HEK293 (cell line): ENCODE measurements at regions of chr22 and their contacts with region 1.

Region 1: GRCh38 chr22:41468381-41469217 is at the starts of genes ACO2 and PHF5A:
- H3K4me3 ChIP-seq: peak within 1 kb of the TSS; percentile 90
- H3K27ac ChIP-seq: peak within 1 kb of the TSS; percentile 84
- H3K4me1 ChIP-seq: no peaks in the 10 kb centered on the region
- CTCF ChIP-seq: no peak

Region 2: DNA sequence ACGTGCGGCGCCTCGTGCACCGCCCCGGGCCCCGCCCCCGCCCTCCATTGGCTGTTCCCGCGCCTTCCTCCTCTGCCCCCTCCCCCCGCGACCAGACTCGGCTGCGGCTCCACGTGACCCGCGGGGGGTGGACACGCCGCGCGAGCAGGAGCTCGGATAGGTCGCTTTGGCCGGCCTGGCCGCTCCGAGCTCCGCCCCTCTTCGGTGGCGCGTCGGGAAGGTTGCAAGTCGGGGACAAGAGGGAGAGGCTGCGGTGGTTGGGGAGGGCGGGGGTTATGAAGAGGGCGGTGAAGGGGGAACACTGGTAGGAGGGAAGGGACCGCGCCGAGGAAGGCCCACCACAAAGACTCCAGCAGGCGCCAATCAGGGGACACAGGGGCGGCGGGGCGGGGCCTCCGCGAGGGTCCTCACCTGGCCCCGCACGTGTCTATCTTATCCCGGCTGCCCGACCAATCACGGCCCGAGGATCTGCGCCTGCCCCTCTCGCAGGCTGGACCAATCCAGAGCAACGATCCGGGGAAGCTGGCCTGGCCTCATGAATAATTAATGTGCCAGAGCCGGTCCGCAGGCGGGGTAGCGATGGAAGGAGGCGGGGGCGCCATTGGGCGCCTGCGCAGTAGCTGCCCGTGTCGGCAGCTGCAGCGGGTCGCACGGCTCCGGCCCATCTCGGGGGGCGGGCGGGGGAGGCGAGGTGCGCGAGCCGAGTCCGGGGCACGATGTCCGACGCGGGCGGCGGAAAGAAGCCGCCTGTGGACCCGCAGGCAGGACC is 87.1 kb before region 1 on chr22 and contains the start of gene TEF:
- CTCF ChIA-PET with region 1: no interaction called
- POLR2A ChIA-PET with region 1: interaction called, 15 read pairs
- H3K4me3 ChIP-seq: peak within 1 kb of the TSS; percentile 66
- H3K27ac ChIP-seq: peak within 1 kb of the TSS; percentile 75
- H3K4me1 ChIP-seq: peaks cover 9% of the 10 kb centered on the region
- CTCF ChIP-seq: no peak

Region 3: GRCh38 chr22:41403532-41404318 is 64.9 kb before region 1 on chr22:
- CTCF ChIA-PET with region 1: interaction called, 16 read pairs
- POLR2A ChIA-PET with region 1: interaction called, 10 read pairs
- H3K4me3 ChIP-seq: no peak overlapping the region
- H3K27ac ChIP-seq: no peak overlapping the region
- H3K4me1 ChIP-seq: no peaks in the 10 kb centered on the region
- CTCF ChIP-seq: peak; percentile 98

Region 4: DNA sequence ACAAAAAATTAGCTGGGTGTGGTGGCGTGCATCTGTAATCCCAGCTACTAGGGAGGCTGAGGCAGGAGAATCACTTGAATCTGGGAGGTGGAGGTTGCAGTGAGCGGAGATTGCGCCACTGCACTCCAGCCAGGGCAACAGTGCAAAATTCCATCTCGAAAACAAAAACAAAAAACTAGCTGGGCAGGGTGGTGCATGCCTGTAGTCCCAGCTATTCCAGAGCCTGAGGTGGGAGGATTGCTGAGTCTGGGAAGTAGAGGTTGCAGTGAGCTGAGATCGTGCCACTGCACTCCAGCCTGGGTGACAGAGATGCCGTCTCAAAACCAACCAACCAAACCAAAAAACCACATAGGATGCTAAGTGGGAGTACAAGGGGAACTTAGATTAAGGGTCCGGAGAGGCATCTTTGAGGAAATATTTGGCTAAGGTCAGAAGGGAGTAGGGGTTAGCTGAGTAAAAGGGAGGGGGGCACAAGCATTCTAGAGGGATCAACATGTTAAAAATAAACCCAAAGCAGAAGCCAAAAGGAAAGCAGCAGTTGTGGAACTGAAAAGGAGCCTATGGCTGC is 10.4 kb before region 1 on chr22:
- CTCF ChIA-PET with region 1: interaction called, 5 read pairs
- POLR2A ChIA-PET with region 1: interaction called, 38 read pairs
- H3K4me3 ChIP-seq: no peak overlapping the region
- H3K27ac ChIP-seq: no peak overlapping the region
- H3K4me1 ChIP-seq: no peaks in the 10 kb centered on the region
- CTCF ChIP-seq: no peak

Region 5: DNA sequence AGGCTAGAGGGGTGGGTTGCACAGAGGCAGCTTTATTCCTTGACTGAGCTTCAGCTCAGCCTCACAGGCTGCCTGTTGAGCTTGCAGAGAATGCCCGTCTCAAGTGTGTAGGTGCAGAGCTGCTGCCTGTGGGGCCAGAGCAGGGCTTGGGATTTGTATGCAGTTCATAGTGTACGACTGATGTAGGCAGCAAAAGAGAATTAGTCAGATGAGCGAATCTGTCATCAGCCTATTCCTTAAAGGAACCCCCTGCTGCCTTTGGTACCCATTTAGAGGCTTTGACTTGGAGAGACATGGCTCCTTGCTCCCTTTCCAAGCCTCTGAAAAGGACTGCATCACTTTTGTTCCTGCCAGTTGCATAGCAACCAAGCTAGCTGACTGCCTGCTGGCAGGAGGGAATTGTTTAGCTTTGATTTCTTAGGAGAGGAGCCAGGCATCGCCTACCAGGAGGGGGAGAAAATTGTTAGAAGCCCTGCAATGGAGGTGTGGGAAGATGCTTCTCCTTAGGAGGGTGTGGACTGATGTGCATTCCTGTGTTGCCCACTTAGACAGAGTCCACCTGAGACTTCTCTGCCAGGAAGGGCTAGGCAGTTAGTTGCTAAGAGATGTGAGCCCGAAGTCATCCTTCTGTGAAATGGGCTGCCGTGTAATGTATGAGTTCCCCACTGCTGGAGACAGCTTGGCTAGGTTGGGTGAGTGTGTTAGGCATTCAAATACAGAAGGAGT is 11.2 kb after region 1 on chr22:
- CTCF ChIA-PET with region 1: interaction called, 4 read pairs
- POLR2A ChIA-PET with region 1: interaction called, 19 read pairs
- H3K4me3 ChIP-seq: no peak overlapping the region
- H3K27ac ChIP-seq: no peak overlapping the region
- H3K4me1 ChIP-seq: no peaks in the 10 kb centered on the region
- CTCF ChIP-seq: no peak

Region 6: GRCh38 chr22:41501209-41501608 is 32.6 kb after region 1 on chr22:
- CTCF ChIA-PET with region 1: no interaction called
- POLR2A ChIA-PET with region 1: interaction called, 10 read pairs
- H3K4me3 ChIP-seq: no peak overlapping the region
- H3K27ac ChIP-seq: no peak overlapping the region
- H3K4me1 ChIP-seq: no peaks in the 10 kb centered on the region
- CTCF ChIP-seq: no peak